ENCODE measurements at regions of chr2 and their contacts with region 1.

Region 1: DNA sequence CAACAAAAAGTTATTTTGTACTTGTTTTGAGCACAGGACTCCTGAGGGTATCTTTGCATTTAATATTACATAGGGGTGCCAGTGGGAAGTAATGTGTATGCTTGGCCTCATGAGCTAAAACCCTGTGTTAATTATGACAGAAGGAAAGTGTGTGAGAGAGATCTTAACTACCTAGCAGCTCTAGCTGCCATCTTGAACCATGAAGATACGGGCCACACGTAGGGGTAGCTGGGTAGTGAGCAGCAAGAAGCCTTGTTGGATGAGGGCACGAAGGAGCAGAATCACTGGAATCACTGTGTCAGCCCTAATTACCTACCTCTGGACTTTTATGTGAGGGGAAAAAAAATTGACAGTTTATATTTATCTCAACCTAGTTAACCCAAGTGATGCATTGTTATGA is 15.4 kb upstream of the CASP10 start:
- DNase-seq: no peak

Region 2: DNA sequence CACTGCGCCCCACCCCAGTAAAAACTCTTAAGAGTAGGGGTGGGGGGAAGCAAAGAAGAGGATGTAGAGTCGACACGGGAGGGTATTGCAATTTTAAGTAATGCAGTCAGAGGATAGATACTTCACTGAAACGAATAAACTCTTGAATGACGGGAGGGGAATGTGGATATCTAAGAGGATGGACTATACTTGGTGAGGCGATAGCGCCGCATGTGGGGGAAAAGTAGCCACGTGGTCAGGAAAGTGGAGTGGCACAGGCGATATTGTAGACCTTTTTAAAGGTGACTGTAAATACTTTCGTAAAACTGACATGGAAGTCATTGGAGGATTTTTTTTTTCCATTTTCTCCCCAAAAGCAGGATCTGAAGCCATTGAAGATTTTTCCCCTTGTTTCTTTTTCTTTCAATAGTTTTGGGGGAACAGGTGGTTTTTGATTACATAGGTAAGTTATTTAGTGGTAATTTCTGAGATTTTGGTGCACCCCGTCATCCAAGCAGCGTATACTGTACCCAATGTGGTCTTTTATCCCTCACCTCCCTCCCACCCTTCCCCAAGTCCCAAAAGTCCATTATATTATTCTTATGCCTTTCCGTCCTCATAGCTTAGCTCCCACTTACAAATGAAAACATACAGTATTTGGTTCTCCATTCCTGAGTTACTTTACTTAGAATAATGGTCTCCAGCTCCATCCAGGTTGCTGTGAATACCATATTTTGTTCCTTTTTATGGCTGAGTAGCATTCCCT is 316.9 kb before region 1 on chr2:
- intact Hi-C with region 1: no loop called
- DNase-seq: no peak

Region 3: DNA sequence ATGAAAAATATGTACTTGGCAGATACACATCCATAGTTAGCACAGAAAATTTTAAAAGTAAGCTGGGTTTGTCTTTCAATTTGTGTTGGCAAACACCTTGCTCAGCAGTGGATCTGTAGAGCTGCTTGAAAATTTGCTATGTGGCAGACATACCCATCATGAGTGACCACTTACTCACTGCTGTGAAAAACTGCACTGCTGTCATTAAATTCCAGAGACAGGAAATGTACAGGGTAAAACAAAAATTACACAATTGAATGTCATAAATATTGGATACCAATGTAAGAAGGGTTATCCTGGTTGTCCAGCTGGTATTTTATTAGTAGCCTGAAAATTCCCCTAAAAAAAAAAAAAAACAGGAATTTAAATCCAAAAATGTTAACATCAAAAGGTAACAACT is 253.9 kb before region 1 on chr2:
- intact Hi-C with region 1: loop called in 1 of 2 experiments (anchors 10 kb)
- DNase-seq: no peak

Region 4: DNA sequence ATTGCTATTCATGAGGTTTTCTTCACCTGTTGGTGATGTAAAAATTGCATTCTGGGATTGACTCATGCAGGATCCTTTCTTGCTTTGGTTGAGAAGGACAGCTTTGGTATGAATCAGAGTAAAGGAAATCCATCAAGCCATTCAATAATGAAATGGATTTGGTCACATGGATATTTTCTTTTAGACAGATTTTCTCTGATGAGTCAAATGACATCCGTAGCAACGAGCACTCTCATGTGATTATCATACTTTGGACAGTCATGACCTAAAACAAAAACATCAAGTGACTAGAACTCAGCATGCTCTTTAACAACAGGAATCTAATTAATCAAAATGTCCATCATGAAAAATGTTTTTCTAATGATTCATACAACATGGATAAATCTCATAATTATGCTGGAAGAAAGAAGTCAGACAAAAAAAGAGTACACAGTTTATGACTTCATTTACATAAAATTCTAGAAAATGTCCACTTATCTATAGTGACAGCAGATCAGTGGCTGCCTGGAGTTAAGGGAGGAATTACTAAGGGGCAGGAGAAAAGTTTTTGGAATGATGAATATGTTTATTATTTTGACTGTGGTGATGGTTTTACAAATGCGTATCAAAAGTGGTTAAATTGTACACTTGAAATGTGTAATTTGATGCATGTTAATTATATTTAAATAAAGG is 253.0 kb after region 1 on chr2:
- intact Hi-C with region 1: no loop called
- DNase-seq: no peak

Measured in posterior vena cava (tissue), 2 donors.